Dorsolateral prefrontal cortex (tissue), 120 donors: ENCODE measurements at regions of chr18 and their contacts with region 1.

Region 1: GRCh38 chr18:67217551-67218166 is 298.9 kb downstream of the DSEL start:
- DNase-seq: peak in 5 of 10 donors; percentile 37 to 63 (median 57)
- H3K4me3 ChIP-seq: no peak overlapping the region
- H3K27ac ChIP-seq: no peak overlapping the region
- H3K27me3 ChIP-seq: peaks cover 0 to 3% (median 0%) of the 10 kb centered on the region in 45 donors
- CTCF ChIP-seq: peak; percentile 76 to 99 (median 93)

Region 2: DNA sequence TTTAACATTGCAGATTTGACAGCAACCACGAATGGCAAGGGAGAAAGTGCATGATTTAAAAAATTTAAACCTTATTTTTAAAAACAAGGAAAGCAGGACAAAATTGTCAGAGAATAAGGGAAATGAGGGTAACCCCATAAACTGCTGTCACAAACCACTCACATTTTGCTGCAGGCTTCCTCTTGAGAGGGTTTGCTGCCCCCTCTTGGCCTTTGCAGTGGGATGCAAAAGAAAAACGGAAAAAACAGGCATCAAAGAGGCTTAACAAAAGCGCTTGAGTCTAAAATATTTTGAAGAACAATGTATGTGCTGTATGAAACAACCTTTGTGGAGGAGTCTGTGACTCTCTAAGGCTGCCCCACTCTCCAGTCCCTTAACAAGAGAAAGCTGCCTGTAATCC is 1405.7 kb after region 1 on chr18:
- intact Hi-C with region 1: loop called (anchors 10 kb)
- DNase-seq: peak in 8 of 10 donors; percentile 35 to 69 (median 62)
- H3K4me3 ChIP-seq: no peak overlapping the region
- H3K27ac ChIP-seq: no peak overlapping the region
- H3K27me3 ChIP-seq: no peaks in the 10 kb centered on the region
- CTCF ChIP-seq: peak; percentile 55 to 85 (median 76)

Region 3: GRCh38 chr18:68660354-68661183 is 1442.9 kb after region 1 on chr18:
- intact Hi-C with region 1: loop called (anchors 2 to 10 kb)
- DNase-seq: no peak
- H3K4me3 ChIP-seq: no peak overlapping the region
- H3K27ac ChIP-seq: no peak overlapping the region
- H3K27me3 ChIP-seq: no peaks in the 10 kb centered on the region
- CTCF ChIP-seq: peak; percentile 40 to 79 (median 64)